Sigmoid colon (tissue), 7 donors: ENCODE measurements at regions of chr13 and their contacts with region 1.

Region 1: GRCh38 chr13:30617315-30618185 is at the start of gene USPL1:
- DNase-seq: peak; percentile 99
- H3K4me3 ChIP-seq: peak within 1 kb of the TSS; percentile 86 to 94 (median 88)
- H3K27ac ChIP-seq: peak within 1 kb of the TSS; percentile 98 to 100 (median 100)
- H3K4me1 ChIP-seq: peaks cover 0 to 40% (median 24%) of the 10 kb centered on the region in 4 donors
- H3K27me3 ChIP-seq: no peaks in the 10 kb centered on the region
- CTCF ChIP-seq: peak in 2 of 4 experiments; percentile 16 to 38
- EP300 ChIP-seq: peak in 3 of 4 donors; percentile 37 to 93 (median 69)
- POLR2A ChIP-seq: peak; percentile 91 to 93
- total RNA-seq, gene USPL1: 17.4 to 34.6 (median 23.7) TPM

Region 2: DNA sequence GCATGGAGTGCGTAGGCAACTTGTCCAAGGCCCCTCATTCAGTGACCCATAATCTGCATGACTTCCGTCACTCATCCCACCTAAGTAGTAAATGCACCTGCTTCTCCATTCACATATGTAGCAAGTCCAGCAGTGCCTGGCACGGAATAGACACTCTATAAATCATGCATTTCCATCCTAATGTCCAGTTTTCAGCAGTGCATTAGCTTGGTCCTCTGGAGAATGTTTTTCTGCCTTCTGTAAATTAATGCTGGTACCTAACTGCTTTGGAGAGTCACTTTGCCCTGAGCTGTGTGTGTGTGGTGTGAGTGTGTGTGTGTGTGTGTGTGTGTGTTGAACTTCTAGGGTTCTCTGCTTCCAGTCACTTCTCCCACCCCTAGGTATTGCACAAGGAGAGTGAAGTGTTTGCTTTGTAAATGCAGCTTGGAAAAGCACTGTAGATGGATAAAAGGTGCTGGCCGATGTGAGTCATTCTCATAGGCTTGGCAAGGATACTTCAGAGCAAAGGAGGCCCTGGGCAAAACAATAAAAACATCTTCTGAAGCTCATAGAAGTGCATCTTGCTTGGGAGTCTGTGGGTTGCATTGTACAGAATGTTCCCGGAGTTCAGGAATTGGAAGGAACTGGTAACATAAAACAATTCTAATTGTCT is 492.0 kb before region 1 on chr13:
- intact Hi-C with region 1: loop called (anchors 5 kb)
- DNase-seq: peak; percentile 90
- H3K4me3 ChIP-seq: no peak overlapping the region
- H3K27ac ChIP-seq: peak overlapping the region; percentile 64 to 91 (median 82)
- H3K4me1 ChIP-seq: peaks cover 0 to 66% (median 62%) of the 10 kb centered on the region in 4 donors
- H3K27me3 ChIP-seq: no peaks in the 10 kb centered on the region
- CTCF ChIP-seq: no peak
- EP300 ChIP-seq: peak; percentile 72 to 97 (median 88)
- POLR2A ChIP-seq: no peak

Region 3: DNA sequence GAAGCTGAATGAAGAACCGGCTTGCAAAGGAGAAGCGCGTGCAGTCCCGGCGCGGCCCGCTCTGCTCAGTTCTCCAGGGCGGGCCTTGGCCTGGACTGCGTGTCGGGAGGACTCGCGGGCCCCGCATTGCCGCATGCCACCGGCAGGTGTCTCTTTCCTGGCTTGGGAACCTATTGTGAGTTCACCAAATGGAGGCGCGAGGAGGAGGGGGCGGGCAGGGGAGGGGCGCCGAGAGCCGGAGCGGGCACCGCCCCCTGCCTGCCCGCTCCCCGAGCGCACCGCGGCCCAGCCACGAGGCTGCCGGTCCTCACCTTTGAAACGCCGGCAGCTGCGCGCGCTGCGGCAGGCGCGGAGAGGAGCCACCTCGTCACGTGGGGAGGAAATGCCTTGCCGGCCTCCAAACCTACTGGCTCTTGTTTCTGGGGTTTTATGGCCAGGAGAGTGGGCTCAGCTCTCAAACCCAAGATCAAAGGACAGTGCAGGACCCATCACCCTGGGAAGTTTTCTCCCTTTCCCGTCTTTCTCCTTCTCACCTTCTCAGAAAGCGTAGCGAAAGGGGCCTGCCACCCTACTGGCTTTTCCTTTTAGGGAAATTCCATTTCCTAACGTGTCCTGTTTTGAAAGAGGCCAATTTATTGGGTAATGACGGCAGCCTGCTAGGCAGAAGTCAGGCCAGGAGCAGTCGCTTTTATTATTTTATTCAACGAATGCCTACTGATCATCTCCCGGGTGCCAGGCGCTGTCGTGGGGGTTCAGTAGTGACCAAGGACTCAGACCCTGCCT is 209.0 kb before region 1 on chr13:
- intact Hi-C with region 1: loop called (anchors 5 kb)
- DNase-seq: peak; percentile 98
- H3K4me3 ChIP-seq: peak overlapping the region; percentile 2 to 42 (median 32)
- H3K27ac ChIP-seq: peak overlapping the region; percentile 84 to 91 (median 88)
- H3K4me1 ChIP-seq: peaks cover 0 to 23% (median 20%) of the 10 kb centered on the region in 4 donors
- H3K27me3 ChIP-seq: no peaks in the 10 kb centered on the region
- CTCF ChIP-seq: peak; percentile 59 to 90 (median 71)
- EP300 ChIP-seq: peak in 1 of 4 donors; percentile 14
- POLR2A ChIP-seq: no peak

Region 4: DNA sequence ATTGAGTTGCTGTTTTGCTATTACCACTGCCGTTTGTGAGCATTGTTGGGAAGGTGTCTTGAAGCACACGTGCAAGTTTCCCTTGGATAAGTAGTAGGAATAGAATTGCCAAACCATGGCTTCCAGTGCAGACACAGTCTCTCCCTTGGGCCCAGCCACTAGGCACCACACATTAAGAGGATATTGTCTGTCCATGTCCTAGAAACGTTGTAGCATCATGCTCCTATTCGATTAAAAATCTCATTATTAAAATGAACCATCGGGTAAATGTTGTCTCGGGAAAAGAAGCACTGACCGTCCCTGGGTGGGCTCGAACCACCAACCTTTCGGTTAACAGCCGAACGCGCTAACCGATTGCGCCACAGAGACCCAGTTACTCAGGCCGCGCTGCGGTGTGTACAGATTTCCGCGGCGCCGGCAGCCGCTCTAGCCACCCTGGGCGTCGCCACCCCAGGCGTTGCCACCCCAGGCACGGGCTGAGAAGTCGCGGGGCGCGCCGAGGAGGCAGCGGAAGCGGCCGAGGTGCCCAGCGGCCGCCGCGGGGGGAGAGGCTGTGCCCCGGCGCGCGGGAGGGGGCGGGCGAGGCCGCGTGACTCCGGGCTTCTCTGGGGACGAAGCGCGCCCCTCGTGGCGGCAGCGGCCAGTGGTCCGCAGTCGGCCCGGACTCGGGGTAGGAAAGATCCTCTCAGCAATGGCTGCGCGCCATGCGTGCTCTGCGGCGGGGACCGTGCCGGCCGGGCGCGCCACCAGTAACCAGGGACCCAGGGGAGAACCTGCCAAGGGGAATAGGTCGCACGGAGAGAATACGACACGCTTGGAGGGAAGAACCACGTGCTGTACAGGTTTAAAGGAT is 56.3 kb after region 1 on chr13:
- intact Hi-C with region 1: loop called (anchors 2 kb)
- DNase-seq: peak; percentile 91
- H3K4me3 ChIP-seq: peak overlapping the region; percentile 18 to 61 (median 48)
- H3K27ac ChIP-seq: peak overlapping the region; percentile 74 to 83 (median 78)
- H3K4me1 ChIP-seq: peaks cover 0 to 11% (median 3%) of the 10 kb centered on the region in 4 donors
- H3K27me3 ChIP-seq: no peaks in the 10 kb centered on the region
- CTCF ChIP-seq: peak in 3 of 4 experiments; percentile 11 to 79 (median 49)
- EP300 ChIP-seq: no peak
- POLR2A ChIP-seq: no peak

Region 5: GRCh38 chr13:30865123-30866049 is 247.8 kb after region 1 on chr13:
- intact Hi-C with region 1: loop called (anchors 5 kb)
- DNase-seq: peak; percentile 92
- H3K4me3 ChIP-seq: peak overlapping the region in 1 of 4 donors; percentile 17
- H3K27ac ChIP-seq: peak overlapping the region; percentile 73 to 87 (median 86)
- H3K4me1 ChIP-seq: peaks cover 0 to 77% (median 62%) of the 10 kb centered on the region in 4 donors
- H3K27me3 ChIP-seq: no peaks in the 10 kb centered on the region
- CTCF ChIP-seq: peak; percentile 86 to 97 (median 94)
- EP300 ChIP-seq: peak in 1 of 4 donors; percentile 1
- POLR2A ChIP-seq: no peak

Region 6: DNA sequence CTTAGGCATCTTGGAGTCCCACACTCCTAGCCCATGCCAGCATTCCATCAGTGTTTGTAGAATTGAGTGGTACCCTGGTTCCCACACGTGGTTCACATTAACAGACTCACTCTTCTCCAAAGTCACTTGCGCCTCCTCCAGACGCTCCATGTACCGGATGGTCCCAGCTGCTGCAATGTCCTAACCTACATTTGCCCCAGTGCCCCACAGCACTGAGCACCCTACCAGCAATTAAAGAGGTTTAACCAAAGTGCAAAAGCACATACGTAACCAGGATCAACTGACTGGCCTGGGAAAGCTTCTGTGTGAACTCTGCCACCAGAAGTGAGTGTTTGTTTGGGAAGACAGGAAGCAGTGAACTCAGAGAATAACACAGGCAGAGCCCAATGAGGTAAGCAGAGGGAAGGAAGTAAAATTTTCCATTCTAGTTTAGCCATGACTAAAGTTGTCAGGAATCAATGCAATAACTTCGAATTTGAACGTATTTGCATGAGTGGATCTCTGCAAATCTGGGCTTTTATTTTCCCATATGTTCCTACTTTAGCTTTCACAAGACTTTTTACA is 281.2 kb after region 1 on chr13:
- intact Hi-C with region 1: no loop called
- DNase-seq: no peak
- H3K4me3 ChIP-seq: no peak overlapping the region
- H3K27ac ChIP-seq: peak overlapping the region in 3 of 4 donors; percentile 20 to 54 (median 51)
- H3K4me1 ChIP-seq: no peaks in the 10 kb centered on the region
- H3K27me3 ChIP-seq: no peaks in the 10 kb centered on the region
- CTCF ChIP-seq: no peak
- EP300 ChIP-seq: no peak
- POLR2A ChIP-seq: no peak